ENCODE measurements at regions of chr11 and their contacts with region 1.

Region 1: DNA sequence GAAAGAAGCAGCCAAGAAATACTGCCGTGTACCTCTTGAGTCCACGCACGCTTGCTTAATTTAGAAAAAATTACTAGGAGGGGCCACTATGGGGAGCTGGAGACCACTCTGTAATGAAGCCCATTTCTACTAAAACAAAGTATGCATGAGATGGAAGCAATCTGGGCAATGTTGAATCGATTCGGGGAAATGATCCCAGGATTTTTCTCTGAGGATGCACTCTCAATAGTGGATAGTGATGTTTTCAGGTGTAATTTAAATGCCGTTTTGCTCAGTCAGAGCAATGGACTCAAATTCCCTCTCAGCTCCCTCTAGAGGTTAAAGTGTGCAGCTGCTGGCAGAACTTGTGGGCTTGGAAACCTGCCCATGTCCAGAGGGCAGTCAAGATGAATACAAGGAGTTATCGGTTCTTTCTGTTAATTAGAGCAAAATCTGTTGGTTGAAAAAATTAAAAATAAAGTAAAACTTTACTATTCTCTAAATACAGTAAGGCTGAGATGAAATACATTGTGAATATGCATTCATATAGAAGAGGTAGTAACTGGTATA is 64.1 kb downstream of the ME3 start:
- DNase-seq: peak; percentile 61 to 87 (median 84)
- ATAC-seq: peak; percentile 80 to 85
- H3K4me3 ChIP-seq: peak overlapping the region; percentile 30
- H3K27ac ChIP-seq: no peak overlapping the region
- H3K4me1 ChIP-seq: peaks cover 3% of the 10 kb centered on the region
- H3K27me3 ChIP-seq: no peaks in the 10 kb centered on the region

Region 2: DNA sequence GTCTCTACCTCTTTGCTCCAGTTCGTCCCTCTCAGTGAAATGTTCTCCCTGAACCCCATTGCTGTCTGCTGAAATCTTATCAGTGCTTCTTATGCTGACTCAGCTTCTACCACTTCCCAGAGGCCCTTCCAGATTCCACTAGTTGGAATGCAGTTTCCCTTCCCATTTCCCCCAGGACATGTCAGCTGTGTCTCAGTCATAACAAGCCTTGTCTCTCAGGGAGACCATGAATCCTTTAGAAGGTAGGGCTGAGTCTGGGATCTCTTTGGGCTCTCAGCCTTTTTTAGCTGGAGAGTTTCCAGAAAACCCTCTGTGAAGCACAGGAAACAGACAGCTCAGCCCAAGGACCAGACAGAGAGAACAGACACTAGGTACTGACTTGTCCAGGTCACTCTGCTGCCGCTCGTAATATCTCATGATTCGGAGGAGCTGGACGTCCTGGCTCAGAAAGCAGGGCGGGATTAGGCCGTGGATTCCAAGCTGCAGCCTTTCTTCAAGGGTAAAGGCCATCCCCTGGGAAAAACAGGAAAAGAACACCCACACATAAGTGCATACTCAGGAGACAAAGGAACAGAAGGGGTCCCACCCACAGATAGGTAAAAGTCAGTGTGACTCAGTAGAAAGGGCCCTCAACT is 48.9 kb before region 1 on chr11:
- intact Hi-C with region 1: loop called in 1 of 4 experiments (anchors 5 kb)
- DNase-seq: peak; percentile 49 to 78 (median 65)
- ATAC-seq: peak; percentile 78 to 92
- H3K4me3 ChIP-seq: no peak overlapping the region
- H3K27ac ChIP-seq: peak overlapping the region; percentile 91
- H3K4me1 ChIP-seq: peaks cover 11% of the 10 kb centered on the region
- H3K27me3 ChIP-seq: no peaks in the 10 kb centered on the region

Region 3: DNA sequence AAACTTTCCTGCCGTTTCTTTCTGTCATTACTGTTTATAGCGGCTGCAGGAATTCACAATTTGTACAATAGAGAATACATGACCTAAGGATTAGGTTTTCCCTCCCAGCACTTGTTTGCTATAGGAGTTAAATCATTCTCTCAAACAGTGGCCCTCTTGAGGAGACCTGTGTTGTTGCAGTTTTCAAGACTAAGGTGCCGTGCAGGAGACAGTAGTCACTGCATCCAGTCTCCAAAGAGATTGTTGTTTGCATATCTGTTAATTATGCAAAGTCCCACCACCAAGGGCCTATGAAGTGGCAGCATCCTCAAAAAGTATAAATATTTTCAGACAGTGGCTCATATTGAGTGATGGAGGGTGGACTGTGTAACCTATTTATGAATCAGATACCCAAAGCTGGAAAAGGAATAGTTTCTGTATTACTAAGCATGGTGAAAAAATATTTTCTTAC is 194.3 kb after region 1 on chr11:
- intact Hi-C with region 1: loop called in 3 of 4 experiments (anchors 5 kb)
- DNase-seq: no peak
- ATAC-seq: peak in 1 of 2 donors; percentile 27
- H3K4me3 ChIP-seq: peak overlapping the region; percentile 87
- H3K27ac ChIP-seq: no peak overlapping the region
- H3K4me1 ChIP-seq: peaks cover 8% of the 10 kb centered on the region
- H3K27me3 ChIP-seq: no peaks in the 10 kb centered on the region

Region 4: DNA sequence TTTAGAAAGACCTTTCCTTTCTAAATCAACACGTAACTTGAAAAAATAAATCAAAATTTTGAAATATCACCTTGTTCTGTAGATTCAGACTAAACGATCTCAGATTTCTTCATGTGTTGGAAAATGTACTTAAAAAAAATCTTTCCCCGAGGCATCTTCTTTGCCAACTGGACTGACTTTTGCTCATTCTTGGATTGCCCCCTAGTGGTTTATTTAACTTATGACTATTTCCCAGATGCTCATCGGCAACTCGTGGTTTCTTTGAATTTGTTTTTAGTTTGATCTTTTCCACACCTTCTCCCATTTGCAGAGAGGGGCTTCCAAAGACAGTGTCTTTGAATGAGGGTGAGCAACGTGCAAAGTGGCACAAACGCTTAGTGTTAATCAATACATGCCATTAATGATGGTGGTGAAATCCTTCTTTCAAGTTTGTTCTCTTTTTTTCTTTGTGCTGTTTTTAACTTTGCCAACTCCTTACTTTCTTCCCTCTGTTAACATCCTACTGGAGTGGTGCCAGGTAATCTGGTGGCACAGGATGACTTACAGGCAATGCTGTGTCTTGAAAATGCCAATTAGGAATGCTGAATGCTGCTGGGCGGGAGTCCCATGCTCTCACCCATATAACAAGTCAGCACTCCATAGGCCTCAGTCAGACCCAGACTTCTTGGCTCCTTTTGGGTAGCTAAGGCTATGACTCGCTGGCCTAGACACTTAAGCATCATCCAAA is 210.3 kb after region 1 on chr11:
- intact Hi-C with region 1: loop called in 2 of 4 experiments (anchors 5 kb)
- DNase-seq: no peak
- ATAC-seq: peak; percentile 20 to 25
- H3K4me3 ChIP-seq: no peak overlapping the region
- H3K27ac ChIP-seq: no peak overlapping the region
- H3K4me1 ChIP-seq: peaks cover 7% of the 10 kb centered on the region
- H3K27me3 ChIP-seq: no peaks in the 10 kb centered on the region